MCF 10A (cell line): ENCODE measurements at regions of chr17 and their contacts with region 1.

Region 1: DNA sequence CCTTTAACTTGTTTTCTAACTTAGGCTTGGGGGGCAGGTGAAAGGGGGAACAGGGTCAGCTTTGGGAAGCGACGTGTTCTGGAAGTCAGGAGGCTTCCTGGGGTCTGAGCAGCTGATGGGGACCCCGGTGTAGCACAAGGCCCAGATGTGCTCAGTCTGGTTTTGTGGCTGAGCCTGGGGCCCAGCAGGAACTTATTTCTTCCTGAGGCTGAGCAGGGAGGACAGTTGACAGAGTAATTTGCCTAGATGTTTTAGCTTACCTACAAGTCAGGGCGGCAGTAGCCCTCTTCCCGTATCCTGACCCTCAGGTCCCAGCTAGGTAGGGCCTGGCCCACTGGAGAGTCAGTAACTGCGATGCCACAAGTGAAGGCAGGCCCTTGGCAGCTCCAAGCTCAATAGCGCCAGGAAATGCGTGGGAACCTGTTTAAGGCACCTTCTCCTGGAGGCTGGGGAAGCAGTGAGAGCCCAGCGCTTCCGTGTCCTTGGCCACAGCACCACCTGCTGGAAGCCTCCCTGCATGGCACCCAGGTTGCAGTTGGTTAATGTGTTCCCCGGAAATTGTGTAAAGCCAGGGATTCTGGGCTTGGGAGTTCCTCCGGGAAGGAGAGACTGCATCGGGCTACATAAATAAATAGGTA is 5.2 kb downstream of the CCR7 start:
- DNase-seq: peak; percentile 98
- H3K4me3 Mint-ChIP-seq: no peak overlapping the region
- H3K27ac Mint-ChIP-seq: peak overlapping the region; percentile 8
- H3K4me1 Mint-ChIP-seq: peaks cover 6% of the 10 kb centered on the region
- H3K27me3 Mint-ChIP-seq: peaks cover 41% of the 10 kb centered on the region
- CTCF ChIP-seq: peak; percentile 97

Region 2: GRCh38 chr17:40399185-40399584 is 160.9 kb before region 1 on chr17:
- CTCF ChIA-PET with region 1: interaction called, 7 read pairs
- POLR2A ChIA-PET with region 1: interaction called, 3 read pairs
- intact Hi-C with region 1: loop called (anchors 1 kb)
- DNase-seq: peak; percentile 61
- H3K4me3 Mint-ChIP-seq: no peak overlapping the region
- H3K27ac Mint-ChIP-seq: no peak overlapping the region
- H3K4me1 Mint-ChIP-seq: peaks cover 6% of the 10 kb centered on the region
- H3K27me3 Mint-ChIP-seq: no peaks in the 10 kb centered on the region
- CTCF ChIP-seq: peak; percentile 46

Region 3: GRCh38 chr17:40443583-40444327 is 116.3 kb before region 1 on chr17:
- CTCF ChIA-PET with region 1: interaction called, 25 read pairs
- POLR2A ChIA-PET with region 1: interaction called, 4 read pairs
- intact Hi-C with region 1: loop called (anchors 1 kb)
- DNase-seq: peak; percentile 72
- H3K4me3 Mint-ChIP-seq: peak overlapping the region; percentile 65
- H3K27ac Mint-ChIP-seq: no peak overlapping the region
- H3K4me1 Mint-ChIP-seq: peaks cover 21% of the 10 kb centered on the region
- H3K27me3 Mint-ChIP-seq: peaks cover 31% of the 10 kb centered on the region
- CTCF ChIP-seq: peak; percentile 6

Region 4: DNA sequence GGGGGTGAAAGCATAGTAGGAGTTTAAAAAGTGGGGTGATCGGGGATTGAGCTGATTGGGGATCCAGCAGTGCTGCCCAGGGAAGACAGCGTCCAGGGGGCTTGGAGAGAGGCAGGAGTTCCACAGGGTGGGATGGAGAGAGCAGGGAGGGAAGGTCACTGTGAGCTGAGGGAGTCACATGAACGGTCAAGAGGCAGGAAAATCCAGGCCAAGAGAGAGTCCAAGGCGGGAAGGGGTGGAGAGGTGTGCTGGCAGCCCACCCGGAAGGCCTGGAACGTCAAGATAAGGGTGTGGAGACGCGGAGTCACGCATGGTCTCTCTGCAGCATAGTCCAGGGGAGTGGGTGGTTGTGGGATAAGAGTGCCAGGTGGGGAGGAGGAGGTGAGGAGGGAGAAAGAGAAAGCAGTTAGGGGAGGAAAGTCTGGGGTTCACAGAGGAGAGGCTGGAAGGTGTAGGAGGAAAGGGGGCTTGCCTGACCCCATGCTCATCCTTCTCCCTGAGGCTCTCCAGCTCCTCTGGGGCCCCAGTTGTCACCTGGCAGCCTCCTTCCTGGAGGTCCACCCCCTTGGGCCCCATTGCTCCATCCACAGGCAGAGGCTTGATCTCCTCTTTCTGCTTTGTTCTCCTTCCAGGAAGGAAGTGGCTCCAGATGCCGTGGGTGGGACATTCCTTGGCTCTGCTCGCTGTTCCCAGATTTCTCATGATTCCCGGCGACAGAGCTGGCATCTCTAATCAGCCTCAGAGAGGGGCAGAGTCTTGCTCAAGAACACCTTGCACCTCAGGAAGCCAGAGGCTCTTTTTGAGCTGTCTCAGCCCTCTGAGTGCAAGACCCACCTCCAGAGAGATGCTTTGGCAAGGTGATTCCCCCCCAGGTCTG is 23.5 kb before region 1 on chr17:
- CTCF ChIA-PET with region 1: interaction called, 90 read pairs
- POLR2A ChIA-PET with region 1: interaction called, 12 read pairs
- intact Hi-C with region 1: loop called (anchors 1 kb)
- DNase-seq: peak; percentile 94
- H3K4me3 Mint-ChIP-seq: peak overlapping the region; percentile 40
- H3K27ac Mint-ChIP-seq: no peak overlapping the region
- H3K4me1 Mint-ChIP-seq: peaks cover 38% of the 10 kb centered on the region
- H3K27me3 Mint-ChIP-seq: no peaks in the 10 kb centered on the region
- CTCF ChIP-seq: no peak